ENCODE measurements at regions of chr4 and their contacts with region 1.

Region 1: DNA sequence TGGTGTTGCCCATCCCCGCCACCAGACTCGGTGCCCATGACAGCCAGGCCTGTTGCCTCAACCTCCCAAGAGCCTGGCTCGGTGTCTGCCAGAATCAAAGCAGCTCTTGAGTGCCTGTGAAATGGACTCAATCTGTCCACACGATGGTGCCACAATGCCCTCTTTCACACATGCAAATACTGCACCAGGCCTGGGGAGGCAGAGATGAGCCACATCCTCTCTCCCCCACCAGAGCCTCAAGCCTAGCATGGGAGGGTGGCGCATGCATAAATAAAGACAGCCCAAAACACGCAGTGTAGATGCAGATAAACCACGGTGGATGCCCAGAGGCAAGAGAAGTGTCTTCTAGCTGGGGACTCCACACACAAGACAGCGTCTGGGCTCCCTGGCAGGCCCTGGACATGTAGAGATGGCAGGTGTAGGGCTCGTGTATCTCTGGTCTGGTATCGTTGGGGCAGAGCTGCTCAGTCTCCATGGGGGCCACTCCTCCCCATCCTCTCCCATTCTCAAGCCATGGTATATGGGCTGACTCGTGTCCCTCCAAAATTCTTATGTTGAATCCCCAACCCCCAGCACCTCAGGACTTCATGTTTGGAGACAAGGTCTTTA is 65.6 kb downstream of the JAKMIP1 start:
- DNase-seq: peak in 3 of 10 donors; percentile 48 to 77 (median 54)
- H3K4me3 ChIP-seq: no peak overlapping the region
- H3K27ac ChIP-seq: no peak overlapping the region
- H3K27me3 ChIP-seq: no peaks in the 10 kb centered on the region
- CTCF ChIP-seq: peak in 38 of 56 donors; percentile 9 to 61 (median 32)

Region 2: DNA sequence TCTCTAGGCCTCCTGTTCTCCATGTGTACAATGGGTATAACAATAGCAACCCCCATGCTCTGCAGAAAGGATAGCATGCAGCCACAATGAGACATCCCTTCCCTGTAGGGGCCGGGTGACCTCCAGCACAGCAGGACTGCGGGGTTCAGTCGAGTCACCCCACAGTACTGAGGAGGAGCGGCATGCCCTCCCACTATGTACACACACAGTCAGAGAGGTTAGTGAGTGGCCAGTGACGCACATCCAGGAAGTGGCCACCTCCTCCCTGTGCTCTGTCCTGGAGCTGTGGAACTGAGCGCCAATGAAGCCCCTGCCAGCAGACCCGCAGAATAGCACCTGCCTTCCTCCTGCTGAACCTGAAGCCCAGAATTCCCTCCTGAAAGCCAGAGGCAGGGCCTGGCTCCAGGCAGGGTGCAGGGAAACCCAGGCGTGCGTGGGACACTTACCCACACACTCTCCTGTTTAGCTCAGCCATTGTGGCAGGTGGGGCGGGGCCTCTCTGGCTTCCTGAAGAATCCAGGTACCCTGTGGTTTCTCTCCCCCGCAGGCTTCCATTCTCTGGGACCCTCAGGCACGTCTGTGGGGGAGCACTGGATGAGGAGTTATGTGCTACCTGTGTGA is 184.9 kb after region 1 on chr4:
- intact Hi-C with region 1: loop called in 1 of 2 experiments (anchors 10 kb)
- DNase-seq: no peak
- H3K4me3 ChIP-seq: no peak overlapping the region
- H3K27ac ChIP-seq: no peak overlapping the region
- H3K27me3 ChIP-seq: no peaks in the 10 kb centered on the region
- CTCF ChIP-seq: no peak

Measured in dorsolateral prefrontal cortex (tissue), 120 donors.